PC-3 (cell line): ENCODE measurements at regions of chr1 and their contacts with region 1.

Region 1: GRCh38 chr1:45550401-45551351 is at the start of gene AKR1A1:
- DNase-seq: peak; percentile 94
- ATAC-seq: peak; percentile 92
- H3K4me3 ChIP-seq: peak within 1 kb of the TSS; percentile 92
- H3K27ac ChIP-seq: peak within 1 kb of the TSS; percentile 72
- H3K4me1 ChIP-seq: peaks cover 15% of the 10 kb centered on the region
- H3K27me3 ChIP-seq: no peaks in the 10 kb centered on the region
- CTCF ChIP-seq: no peak
- total RNA-seq, gene AKR1A1: 86.1 and 94.9 TPM in 2 replicates

Region 2: DNA sequence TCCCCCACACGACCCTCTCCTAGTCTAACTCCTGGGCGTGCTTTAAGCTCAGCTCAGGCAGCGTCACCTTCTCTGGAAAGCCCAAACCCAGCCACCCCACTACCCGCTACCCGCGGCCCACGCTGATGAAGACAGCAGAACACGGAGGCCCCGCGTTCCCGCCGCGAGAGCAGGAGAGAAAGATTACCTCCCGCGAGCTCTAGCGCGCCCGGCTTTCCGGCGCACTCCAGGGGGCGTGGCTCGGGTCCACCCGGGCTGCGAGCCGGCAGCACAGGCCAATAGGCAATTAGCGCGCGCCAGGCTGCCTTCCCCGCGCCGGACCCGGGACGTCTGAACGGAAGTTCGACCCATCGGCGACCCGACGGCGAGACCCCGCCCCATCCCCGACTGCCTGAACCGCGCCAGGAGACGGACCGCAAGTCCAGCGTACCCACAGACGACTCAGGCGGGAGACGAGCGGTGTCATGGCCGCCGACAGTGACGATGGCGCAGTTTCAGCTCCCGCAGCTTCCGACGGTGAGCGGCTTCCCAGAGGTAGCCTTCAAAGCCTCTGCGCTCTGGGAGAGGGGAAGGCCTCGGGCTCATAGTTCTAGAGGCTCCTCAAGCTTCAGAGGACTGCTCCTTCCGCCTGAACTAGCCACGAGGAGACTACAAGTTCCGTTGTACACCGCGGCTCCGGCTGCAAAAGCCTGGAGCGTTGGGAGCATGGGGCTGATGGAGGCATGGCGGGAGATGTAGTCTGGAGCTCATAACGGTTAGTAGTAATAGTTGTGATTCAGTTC is 210.7 kb before region 1 on chr1 and contains the starts of genes MUTYH and TOE1:
- CTCF ChIA-PET with region 1: no interaction called
- POLR2A ChIA-PET with region 1: interaction called, 14 read pairs
- intact Hi-C with region 1: no loop called
- DNase-seq: peak; percentile 93
- ATAC-seq: peak; percentile 80
- H3K4me3 ChIP-seq: peak within 1 kb of the TSS; percentile 83
- H3K27ac ChIP-seq: peak within 1 kb of the TSS; percentile 76
- H3K4me1 ChIP-seq: peaks cover 43% of the 10 kb centered on the region
- H3K27me3 ChIP-seq: no peaks in the 10 kb centered on the region
- CTCF ChIP-seq: no peak
- total RNA-seq, gene MUTYH: 21.4 and 22.8 TPM in 2 replicates
- total RNA-seq, gene TOE1: 18.2 and 19.5 TPM in 2 replicates

Region 3: DNA sequence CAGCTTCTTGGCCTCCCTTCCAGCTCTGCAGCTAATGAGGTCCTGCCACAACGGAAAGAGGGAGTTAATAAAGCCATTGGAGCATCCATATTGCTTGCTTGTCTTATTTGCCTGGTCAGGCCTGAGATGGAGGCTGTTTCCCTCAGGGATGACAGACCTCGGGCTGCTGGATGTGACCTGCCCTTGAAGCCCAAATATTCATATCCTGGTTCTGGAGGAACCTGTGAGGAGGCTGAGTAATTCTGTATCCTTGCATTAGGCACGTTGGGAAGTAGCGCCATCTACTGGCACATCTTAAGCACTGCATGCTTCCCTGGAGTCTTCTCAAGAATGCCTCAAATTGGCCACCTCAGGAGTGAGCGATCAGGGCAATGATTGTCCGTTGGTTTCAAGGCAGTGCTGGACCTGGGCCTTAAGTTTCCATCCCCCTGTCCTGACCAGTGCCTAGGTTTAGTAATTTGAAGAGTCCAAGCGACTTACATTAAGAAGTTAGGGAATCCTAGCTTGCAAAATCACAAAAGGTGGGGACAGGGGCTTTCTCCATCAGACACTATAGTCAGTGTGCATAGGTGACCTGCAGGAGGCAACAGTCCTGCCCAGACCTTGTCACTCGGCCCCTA is 19.4 kb after region 1 on chr1:
- CTCF ChIA-PET with region 1: no interaction called
- POLR2A ChIA-PET with region 1: no interaction called
- intact Hi-C with region 1: no loop called
- DNase-seq: peak; percentile 88
- ATAC-seq: peak; percentile 91
- H3K4me3 ChIP-seq: no peak overlapping the region
- H3K27ac ChIP-seq: no peak overlapping the region
- H3K4me1 ChIP-seq: no peaks in the 10 kb centered on the region
- H3K27me3 ChIP-seq: no peaks in the 10 kb centered on the region
- CTCF ChIP-seq: peak; percentile 96